ENCODE measurements at regions of chr2 and their contacts with region 1.

Region 1: GRCh38 chr2:222318026-222318711 is 19.4 kb upstream of the PAX3 start:
- DNase-seq: peak; percentile 74 to 83
- H3K4me3 ChIP-seq: peak overlapping the region; percentile 35
- H3K4me3 Mint-ChIP-seq: peak overlapping the region; percentile 79
- H3K27ac Mint-ChIP-seq: no peak overlapping the region
- H3K4me1 ChIP-seq: peaks cover 12% of the 10 kb centered on the region
- H3K4me1 Mint-ChIP-seq: no peaks in the 10 kb centered on the region
- H3K27me3 ChIP-seq: peaks cover 3% of the 10 kb centered on the region; the same call in 1 of the 2 replicates
- H3K27me3 Mint-ChIP-seq: peaks cover 34% of the 10 kb centered on the region
- CTCF ChIP-seq: peak; percentile 56 to 70

Region 2: GRCh38 chr2:221716426-221717303 is 601.5 kb before region 1 on chr2:
- CTCF ChIA-PET with region 1: no interaction called
- POLR2A ChIA-PET with region 1: no interaction called
- intact Hi-C with region 1: no loop called
- DNase-seq: peak; percentile 71 to 82
- H3K4me3 ChIP-seq: no peak overlapping the region
- H3K4me3 Mint-ChIP-seq: peak overlapping the region; percentile 57
- H3K27ac Mint-ChIP-seq: peak overlapping the region; percentile 93
- H3K4me1 ChIP-seq: peaks cover 47% of the 10 kb centered on the region
- H3K4me1 Mint-ChIP-seq: peaks cover 55% of the 10 kb centered on the region
- H3K27me3 ChIP-seq: no peaks in the 10 kb centered on the region
- H3K27me3 Mint-ChIP-seq: no peaks in the 10 kb centered on the region
- CTCF ChIP-seq: no peak

Region 3: DNA sequence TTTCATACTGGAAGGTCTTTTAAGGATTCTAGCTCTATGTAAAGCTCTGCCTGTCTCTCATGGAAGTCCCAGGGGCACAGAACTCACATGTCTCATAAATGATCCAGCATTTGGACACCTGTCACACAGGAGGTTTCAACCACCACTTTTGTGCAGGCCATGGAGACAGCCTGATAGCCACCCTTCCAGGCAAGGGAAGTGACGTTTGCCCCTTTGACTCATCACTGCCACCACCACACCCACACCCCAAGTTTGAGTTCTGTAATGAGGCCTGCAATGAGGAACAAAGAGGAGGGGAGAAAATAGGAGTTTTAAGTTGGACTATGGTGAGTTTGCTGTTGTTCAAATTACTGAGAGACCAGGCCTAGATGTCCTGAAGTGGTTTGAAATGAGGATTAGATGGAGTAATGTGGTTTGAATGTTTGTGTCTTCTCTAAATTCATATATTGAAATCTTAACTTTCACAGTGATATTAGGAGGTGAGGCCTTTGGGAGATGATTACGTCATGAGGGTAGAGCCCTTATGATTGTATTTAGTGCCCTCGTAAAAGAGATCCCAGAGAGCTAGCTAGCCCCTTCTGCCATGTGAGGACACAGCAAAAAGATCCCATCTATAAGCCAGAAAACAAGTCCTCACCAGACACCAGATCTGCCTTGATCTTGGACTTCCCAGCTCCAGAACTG is 570.7 kb before region 1 on chr2:
- CTCF ChIA-PET with region 1: no interaction called
- POLR2A ChIA-PET with region 1: no interaction called
- intact Hi-C with region 1: loop called (anchors 10 kb)
- DNase-seq: no peak
- H3K4me3 ChIP-seq: no peak overlapping the region
- H3K4me3 Mint-ChIP-seq: no peak overlapping the region
- H3K27ac Mint-ChIP-seq: no peak overlapping the region
- H3K4me1 ChIP-seq: no peaks in the 10 kb centered on the region
- H3K4me1 Mint-ChIP-seq: no peaks in the 10 kb centered on the region
- H3K27me3 ChIP-seq: no peaks in the 10 kb centered on the region
- H3K27me3 Mint-ChIP-seq: no peaks in the 10 kb centered on the region
- CTCF ChIP-seq: no peak

Region 4: GRCh38 chr2:222057347-222058073 is 260.7 kb before region 1 on chr2:
- CTCF ChIA-PET with region 1: interaction called, 3 read pairs
- POLR2A ChIA-PET with region 1: no interaction called
- intact Hi-C with region 1: loop called (anchors 1 kb)
- DNase-seq: no peak
- H3K4me3 ChIP-seq: no peak overlapping the region
- H3K4me3 Mint-ChIP-seq: no peak overlapping the region
- H3K27ac Mint-ChIP-seq: no peak overlapping the region
- H3K4me1 ChIP-seq: no peaks in the 10 kb centered on the region
- H3K4me1 Mint-ChIP-seq: no peaks in the 10 kb centered on the region
- H3K27me3 ChIP-seq: peaks cover 4% of the 10 kb centered on the region; the same call in 1 of the 2 replicates
- H3K27me3 Mint-ChIP-seq: peaks cover 28% of the 10 kb centered on the region
- CTCF ChIP-seq: peak; percentile 72 to 83

Region 5: GRCh38 chr2:222424729-222425671 is 106.8 kb after region 1 on chr2:
- CTCF ChIA-PET with region 1: no interaction called
- POLR2A ChIA-PET with region 1: no interaction called
- intact Hi-C with region 1: loop called (anchors 2 kb)
- DNase-seq: peak in 1 of 2 experiments; percentile 15
- H3K4me3 ChIP-seq: peak overlapping the region; percentile 41
- H3K4me3 Mint-ChIP-seq: peak overlapping the region; percentile 84
- H3K27ac Mint-ChIP-seq: no peak overlapping the region
- H3K4me1 ChIP-seq: peaks cover 3% of the 10 kb centered on the region; the same call in 1 of the 2 replicates
- H3K4me1 Mint-ChIP-seq: peaks cover 12% of the 10 kb centered on the region
- H3K27me3 ChIP-seq: peaks cover 5% of the 10 kb centered on the region; the same call in 1 of the 2 replicates
- H3K27me3 Mint-ChIP-seq: peaks cover 29% of the 10 kb centered on the region
- CTCF ChIP-seq: no peak

Region 6: GRCh38 chr2:222561817-222562645 is 243.9 kb after region 1 on chr2:
- CTCF ChIA-PET with region 1: interaction called, 13 read pairs
- POLR2A ChIA-PET with region 1: no interaction called
- intact Hi-C with region 1: loop called (anchors 1 kb)
- DNase-seq: peak in 1 of 2 experiments; percentile 69
- H3K4me3 ChIP-seq: no peak overlapping the region
- H3K4me3 Mint-ChIP-seq: no peak overlapping the region
- H3K27ac Mint-ChIP-seq: no peak overlapping the region
- H3K4me1 ChIP-seq: no peaks in the 10 kb centered on the region
- H3K4me1 Mint-ChIP-seq: no peaks in the 10 kb centered on the region
- H3K27me3 ChIP-seq: no peaks in the 10 kb centered on the region
- H3K27me3 Mint-ChIP-seq: peaks cover 4% of the 10 kb centered on the region
- CTCF ChIP-seq: peak; percentile 58 to 80